ENCODE measurements at regions of chr3 and their contacts with region 1.

Region 1: GRCh38 chr3:44976002-44976815 is at the starts of genes EXOSC7 and ZDHHC3:
- DNase-seq: peak; percentile 24 to 92
- H3K4me3 ChIP-seq: peak within 1 kb of the TSS; percentile 77 to 84
- H3K27ac ChIP-seq: peak within 1 kb of the TSS; percentile 60 to 80
- H3K4me1 ChIP-seq: peaks cover 12 to 16% of the 10 kb centered on the region in 2 donors
- H3K27me3 ChIP-seq: no peaks in the 10 kb centered on the region
- CTCF ChIP-seq: no peak
- total RNA-seq, gene EXOSC7: 51.2 TPM
- total RNA-seq, gene ZDHHC3: 67.8 TPM

Region 2: GRCh38 chr3:44761424-44762169 is 214.6 kb before region 1 on chr3 and contains the starts of genes KIAA1143 and KIF15:
- intact Hi-C with region 1: loop called (anchors 1 kb)
- DNase-seq: peak; percentile 81 to 97
- H3K4me3 ChIP-seq: peak within 1 kb of the TSS; percentile 59 to 87
- H3K27ac ChIP-seq: peak within 1 kb of the TSS; percentile 7 to 56
- H3K4me1 ChIP-seq: peaks cover 0 to 5% of the 10 kb centered on the region in 2 donors
- H3K27me3 ChIP-seq: no peaks in the 10 kb centered on the region
- CTCF ChIP-seq: no peak
- total RNA-seq, gene KIAA1143: 12.0 TPM
- total RNA-seq, gene KIF15: 0.64 TPM

Region 3: GRCh38 chr3:44885618-44886017 is 90.6 kb before region 1 on chr3:
- intact Hi-C with region 1: loop called (anchors 1 kb)
- DNase-seq: peak in 1 of 2 donors; percentile 83
- H3K4me3 ChIP-seq: no peak overlapping the region
- H3K27ac ChIP-seq: no peak overlapping the region
- H3K4me1 ChIP-seq: peaks cover 0 to 17% of the 10 kb centered on the region in 2 donors
- H3K27me3 ChIP-seq: no peaks in the 10 kb centered on the region
- CTCF ChIP-seq: no peak

Region 4: GRCh38 chr3:45037734-45038455 is 61.7 kb after region 1 on chr3:
- intact Hi-C with region 1: loop called (anchors 1 kb)
- DNase-seq: peak; percentile 75 to 96
- H3K4me3 ChIP-seq: no peak overlapping the region
- H3K27ac ChIP-seq: no peak overlapping the region
- H3K4me1 ChIP-seq: peaks cover 6 to 15% of the 10 kb centered on the region in 2 donors
- H3K27me3 ChIP-seq: no peaks in the 10 kb centered on the region
- CTCF ChIP-seq: peak; percentile 91 to 95 (median 95)

Region 5: DNA sequence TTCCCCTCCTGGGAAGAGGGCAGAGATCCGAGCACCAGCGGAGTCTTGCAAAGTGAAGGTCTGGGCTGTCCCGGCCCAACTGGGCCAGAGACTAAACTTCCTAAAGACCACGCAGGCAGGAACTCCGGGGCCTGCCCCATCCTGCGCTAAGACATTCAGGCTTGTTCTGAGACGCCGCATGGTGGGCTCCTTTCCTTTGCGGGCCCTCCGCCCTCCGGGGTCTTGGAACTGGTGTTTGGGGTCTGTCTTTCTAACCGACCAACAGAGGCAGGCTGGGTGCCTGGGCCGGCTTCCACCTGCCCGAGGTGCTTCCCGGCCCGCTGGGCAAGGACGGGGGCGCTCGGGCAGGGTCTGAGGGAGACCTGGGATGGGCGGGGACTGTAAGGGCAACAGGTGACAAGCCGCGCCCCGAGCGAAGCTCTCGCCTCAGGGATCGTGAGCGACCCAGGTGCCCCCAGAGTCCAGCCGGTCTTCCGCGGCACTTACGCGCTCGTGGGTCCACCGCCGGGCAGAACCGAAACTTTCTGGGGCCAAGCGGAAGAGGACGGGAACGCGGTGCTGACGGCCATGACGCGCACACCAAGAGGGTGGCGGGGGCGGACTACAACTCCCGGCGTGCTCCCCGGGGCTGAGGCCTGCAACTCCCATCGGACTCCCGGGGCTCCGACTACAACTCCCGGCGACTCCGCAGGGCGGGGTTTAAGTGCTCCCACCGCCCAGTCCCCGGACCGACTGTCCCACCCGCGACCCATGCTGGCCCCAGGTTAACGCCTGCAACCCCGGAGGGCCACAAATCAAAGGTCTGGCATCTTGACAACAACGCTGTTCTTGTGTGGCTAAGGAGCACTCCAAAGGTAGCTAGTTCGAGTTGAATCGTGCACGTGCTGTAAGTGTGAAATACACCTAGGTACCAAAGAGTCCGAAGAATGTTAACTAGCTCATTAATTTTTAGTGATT is 1019.3 kb after region 1 on chr3 and contains the start of gene FYCO1:
- intact Hi-C with region 1: loop called (anchors 2 kb)
- DNase-seq: peak; percentile 83 to 97
- H3K4me3 ChIP-seq: peak within 1 kb of the TSS; percentile 71 to 90
- H3K27ac ChIP-seq: peak within 1 kb of the TSS; percentile 94 to 99
- H3K4me1 ChIP-seq: peaks cover 15 to 45% of the 10 kb centered on the region in 2 donors
- H3K27me3 ChIP-seq: no peaks in the 10 kb centered on the region
- CTCF ChIP-seq: no peak
- total RNA-seq, gene FYCO1: 56.2 TPM

Measured in ascending aorta (tissue), 2 donors.